ENCODE measurements at regions of chr20 and their contacts with region 1.

Region 1: GRCh38 chr20:58209652-58210397 is 18.6 kb downstream of the ANKRD60 start:
- DNase-seq: peak; percentile 96

Region 2: DNA sequence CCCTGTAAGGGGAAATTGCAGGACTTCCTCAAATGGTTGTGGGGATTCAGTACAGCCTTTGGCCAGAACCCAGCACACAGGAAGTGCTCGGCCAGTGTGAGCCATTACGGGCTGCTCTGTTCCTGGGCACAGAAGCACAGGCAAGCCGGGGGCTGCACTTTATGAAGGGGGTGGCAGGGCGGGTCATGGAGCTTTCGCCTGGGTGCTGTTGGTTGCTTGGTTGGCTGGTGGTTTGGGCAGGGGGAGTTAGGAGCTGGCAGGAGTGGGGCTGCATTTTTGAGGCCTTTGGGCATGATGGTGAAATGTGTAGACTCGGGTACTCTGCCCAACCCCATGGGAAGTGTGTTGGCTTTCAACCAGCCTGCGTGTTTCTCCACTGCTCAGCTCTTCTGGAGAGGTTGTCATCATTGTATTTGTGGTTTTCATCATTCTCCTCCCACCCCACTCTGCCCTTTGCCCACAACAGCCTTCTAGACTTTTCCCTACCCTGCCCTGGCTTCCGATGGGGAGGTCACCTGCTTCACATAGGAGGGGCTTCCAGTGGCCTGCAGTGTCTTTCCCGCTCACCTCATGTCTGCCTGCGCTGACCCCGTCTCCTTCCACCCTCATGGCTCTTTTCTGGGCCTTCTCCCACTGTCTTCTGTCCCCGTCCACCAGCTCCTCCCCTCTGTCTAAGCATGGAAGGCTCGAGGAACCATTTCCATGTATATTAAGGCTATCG is 834.7 kb before region 1 on chr20:
- intact Hi-C with region 1: loop called in 1 of 2 experiments (anchors 10 kb)
- DNase-seq: peak; percentile 86

Region 3: DNA sequence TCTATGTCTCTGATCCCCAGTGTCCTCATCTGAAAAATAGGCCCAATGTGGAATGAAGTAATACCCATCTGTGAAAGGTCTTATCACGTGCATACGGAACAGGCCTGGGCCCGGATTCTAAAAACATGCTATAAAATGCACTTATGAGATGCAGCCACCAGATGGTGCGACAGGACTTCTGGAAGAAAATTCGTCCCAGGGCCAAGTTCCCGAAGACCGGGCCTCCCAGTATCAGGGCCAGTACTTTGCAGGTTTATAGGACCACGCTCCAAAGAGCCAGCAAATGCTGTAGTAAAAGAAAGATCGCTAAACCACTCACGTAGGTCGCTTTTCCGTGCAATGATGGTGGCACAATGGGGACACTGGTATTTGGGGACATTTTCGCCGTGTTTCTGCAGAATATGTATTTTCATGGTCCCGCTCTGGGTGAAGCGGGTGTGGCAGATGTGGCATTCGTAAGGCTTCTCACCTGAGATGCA is 695.5 kb before region 1 on chr20:
- intact Hi-C with region 1: loop called (anchors 5 kb)
- DNase-seq: no peak

Measured in posterior vena cava (tissue), 2 donors.